ENCODE measurements at regions of chr6 and their contacts with region 1.

Region 1: GRCh38 chr6:73610444-73611275 is 43.1 kb downstream of the SLC17A5 start:
- DNase-seq: peak; percentile 61
- H3K4me3 Mint-ChIP-seq: no peak overlapping the region
- H3K27ac Mint-ChIP-seq: no peak overlapping the region
- H3K4me1 Mint-ChIP-seq: peaks cover 2% of the 10 kb centered on the region
- H3K27me3 Mint-ChIP-seq: no peaks in the 10 kb centered on the region

Region 2: DNA sequence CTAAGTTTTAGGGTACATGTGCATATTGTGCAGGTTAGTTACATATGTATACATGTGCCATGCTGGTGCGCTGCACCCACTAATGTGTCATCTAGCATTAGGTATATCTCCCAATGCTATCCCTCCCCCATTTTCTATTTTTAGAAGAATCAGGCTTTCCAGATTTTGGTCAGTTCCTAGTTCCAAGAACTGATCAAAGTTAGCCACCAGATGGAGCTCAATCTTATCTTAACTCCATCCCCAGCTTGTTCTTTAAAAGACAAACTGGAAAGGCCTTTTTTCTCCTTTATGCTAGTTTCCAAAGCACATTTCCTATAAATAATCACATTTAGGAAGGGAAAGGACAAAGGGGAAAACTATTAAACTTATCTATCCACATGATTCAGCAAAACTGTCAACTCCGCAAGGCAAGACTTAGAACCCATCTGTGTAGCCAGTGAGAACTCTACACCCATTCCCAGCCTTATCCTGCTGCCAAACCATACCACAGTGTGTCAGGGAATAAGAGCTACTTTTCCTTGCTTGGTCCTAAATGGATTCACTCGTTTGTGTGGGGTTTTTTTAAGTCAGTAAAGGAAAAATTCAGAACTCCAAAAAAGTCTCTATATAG is 324.9 kb before region 1 on chr6:
- intact Hi-C with region 1: loop called (anchors 10 kb)
- DNase-seq: no peak
- H3K4me3 Mint-ChIP-seq: no peak overlapping the region
- H3K27ac Mint-ChIP-seq: no peak overlapping the region
- H3K4me1 Mint-ChIP-seq: no peaks in the 10 kb centered on the region
- H3K27me3 Mint-ChIP-seq: no peaks in the 10 kb centered on the region

Region 3: GRCh38 chr6:73515204-73515655 is 95.4 kb before region 1 on chr6:
- intact Hi-C with region 1: loop called (anchors 1 kb)
- DNase-seq: peak; percentile 66
- H3K4me3 Mint-ChIP-seq: no peak overlapping the region
- H3K27ac Mint-ChIP-seq: peak overlapping the region; percentile 92
- H3K4me1 Mint-ChIP-seq: peaks cover 50% of the 10 kb centered on the region
- H3K27me3 Mint-ChIP-seq: peaks cover 4% of the 10 kb centered on the region